OCI-LY7 (cell line): ENCODE measurements at regions of chr11 and their contacts with region 1.

Region 1: GRCh38 chr11:126480410-126481302 is 125.2 kb downstream of the ST3GAL4 start:
- DNase-seq: peak; percentile 90
- H3K4me3 ChIP-seq: peak overlapping the region; percentile 39
- H3K27ac ChIP-seq: peak overlapping the region; percentile 44
- H3K4me1 ChIP-seq: peaks cover 33% of the 10 kb centered on the region
- CTCF ChIP-seq: peak; percentile 97

Region 2: DNA sequence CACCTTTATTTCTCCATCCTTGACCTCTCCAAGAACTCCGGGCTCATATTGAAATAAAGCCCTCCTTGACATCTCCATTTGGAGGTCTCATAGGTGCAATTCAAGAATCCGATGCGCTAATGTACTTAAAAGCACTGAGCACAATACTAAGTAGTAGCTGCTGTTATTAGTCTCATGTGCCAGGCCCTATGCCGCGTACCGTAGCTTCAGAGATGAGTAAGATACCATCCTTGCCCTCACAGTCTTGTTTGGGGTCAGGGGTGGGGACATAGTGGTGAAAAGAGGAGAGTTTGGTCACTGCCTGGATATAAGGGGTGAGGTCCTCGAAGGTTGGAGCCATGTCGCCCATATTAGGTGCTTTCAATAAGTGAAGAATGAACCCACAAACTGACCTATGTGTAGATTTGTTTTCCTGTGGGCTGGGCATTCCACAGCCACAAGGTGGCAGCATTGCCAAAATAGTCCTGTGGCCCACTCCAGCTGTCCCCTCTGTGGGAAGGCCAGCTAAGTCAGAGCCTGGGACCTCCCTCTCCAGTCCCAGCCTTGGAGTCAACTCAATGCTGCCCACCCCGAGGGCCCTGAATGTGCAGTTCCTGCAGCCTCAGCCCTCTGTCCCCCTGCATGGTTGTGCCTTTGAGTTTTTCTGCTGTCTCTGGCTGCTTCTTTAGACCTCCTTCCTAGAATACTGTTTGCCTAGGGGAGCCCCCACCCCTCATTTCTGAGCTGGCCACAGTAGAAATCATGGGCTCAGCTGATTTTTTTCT is 170.2 kb before region 1 on chr11:
- CTCF ChIA-PET with region 1: interaction called, 6 read pairs
- POLR2A ChIA-PET with region 1: no interaction called
- intact Hi-C with region 1: loop called (anchors 1 kb)
- DNase-seq: peak; percentile 66
- H3K4me3 ChIP-seq: no peak overlapping the region
- H3K27ac ChIP-seq: no peak overlapping the region
- H3K4me1 ChIP-seq: peaks cover 9% of the 10 kb centered on the region
- CTCF ChIP-seq: peak; percentile 95

Region 3: DNA sequence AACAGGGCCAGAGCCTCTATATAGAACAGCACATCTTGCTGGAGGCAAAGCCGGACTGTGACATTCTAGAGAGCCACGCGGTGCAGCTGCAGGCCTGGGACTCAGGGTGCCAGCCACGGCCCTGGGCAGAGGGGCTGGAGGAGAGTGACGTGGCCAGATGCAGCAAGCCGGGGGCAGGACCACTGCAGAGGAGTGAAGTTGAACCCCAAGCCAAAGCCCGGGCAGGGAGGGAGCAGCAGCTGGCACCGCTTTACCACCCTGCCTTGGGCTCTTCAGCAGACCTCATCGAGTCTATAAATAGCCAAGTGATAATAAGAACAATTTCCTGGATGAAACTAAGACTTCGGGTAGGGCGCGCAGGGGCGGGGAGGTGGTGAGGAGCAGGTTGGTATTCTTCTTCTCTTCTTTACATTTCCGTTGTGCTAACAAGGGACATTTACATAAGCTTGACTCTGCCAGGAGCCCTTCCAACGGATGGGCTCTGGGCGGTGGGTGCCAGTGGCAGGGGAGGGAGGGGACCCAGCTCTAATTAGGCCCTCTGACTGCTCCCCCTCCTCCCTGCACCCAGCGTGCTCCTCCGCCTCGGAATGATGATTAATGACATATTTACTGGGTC is 15.0 kb before region 1 on chr11:
- CTCF ChIA-PET with region 1: interaction called, 32 read pairs
- POLR2A ChIA-PET with region 1: interaction called, 48 read pairs
- intact Hi-C with region 1: loop called (anchors 1 kb)
- DNase-seq: peak; percentile 90
- H3K4me3 ChIP-seq: peak overlapping the region; percentile 57
- H3K27ac ChIP-seq: peak overlapping the region; percentile 89
- H3K4me1 ChIP-seq: peaks cover 45% of the 10 kb centered on the region
- CTCF ChIP-seq: no peak

Region 4: GRCh38 chr11:126538071-126538470 is 57.4 kb after region 1 on chr11:
- CTCF ChIA-PET with region 1: no interaction called
- POLR2A ChIA-PET with region 1: no interaction called
- intact Hi-C with region 1: no loop called
- DNase-seq: no peak
- H3K4me3 ChIP-seq: no peak overlapping the region
- H3K27ac ChIP-seq: no peak overlapping the region
- H3K4me1 ChIP-seq: no peaks in the 10 kb centered on the region
- CTCF ChIP-seq: no peak

Region 5: GRCh38 chr11:127042445-127042844 is 561.8 kb after region 1 on chr11:
- CTCF ChIA-PET with region 1: no interaction called
- POLR2A ChIA-PET with region 1: no interaction called
- intact Hi-C with region 1: no loop called
- DNase-seq: no peak
- H3K4me3 ChIP-seq: no peak overlapping the region
- H3K27ac ChIP-seq: no peak overlapping the region
- H3K4me1 ChIP-seq: no peaks in the 10 kb centered on the region
- CTCF ChIP-seq: no peak